Right lobe of liver (tissue), 6 donors: ENCODE measurements at regions of chr2 and their contacts with region 1.

Region 1: DNA sequence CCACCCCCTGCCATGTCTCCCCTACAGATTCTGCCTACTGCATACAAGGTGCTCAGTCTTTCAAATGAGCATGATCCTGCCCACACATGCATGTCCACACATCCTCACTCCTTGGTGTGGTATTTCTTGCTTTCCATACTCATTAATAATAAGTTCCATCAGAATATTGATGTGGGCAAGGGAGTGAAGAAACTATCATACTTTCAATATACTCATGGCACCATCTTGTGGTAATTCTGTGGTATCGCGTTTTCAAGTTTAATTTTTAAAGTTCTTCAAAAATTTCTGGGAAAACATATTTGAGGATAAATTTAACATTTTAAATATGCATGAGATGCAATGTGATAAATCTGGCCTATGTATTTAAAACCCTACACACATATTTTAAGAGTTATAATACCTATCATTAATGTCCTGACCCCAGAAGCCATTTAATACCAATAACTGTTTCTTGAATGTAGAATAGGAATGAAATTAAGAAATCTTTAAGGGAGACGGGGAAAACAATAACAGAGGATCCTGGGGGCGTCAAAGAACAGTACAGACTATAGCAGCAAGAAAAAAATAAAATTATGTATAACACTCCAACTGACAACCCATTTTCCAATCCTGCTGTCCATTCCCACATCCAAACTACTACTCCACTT is 110.1 kb downstream of the ZNF385B start:
- DNase-seq: no peak
- ATAC-seq: peak; percentile 56 to 71 (median 64)
- H3K4me3 ChIP-seq: no peak overlapping the region
- H3K27ac ChIP-seq: no peak overlapping the region
- H3K4me1 ChIP-seq: no peaks in the 10 kb centered on the region
- H3K27me3 ChIP-seq: no peaks in the 10 kb centered on the region
- CTCF ChIP-seq: peak; percentile 57 to 82 (median 64)
- POLR2A ChIP-seq: no peak

Region 2: GRCh38 chr2:179422037-179422643 is 329.1 kb before region 1 on chr2:
- intact Hi-C with region 1: loop called in 1 of 2 experiments (anchors 10 kb)
- DNase-seq: peak; percentile 70 to 75 (median 71)
- ATAC-seq: peak; percentile 94 to 95 (median 94)
- H3K4me3 ChIP-seq: no peak overlapping the region
- H3K27ac ChIP-seq: no peak overlapping the region
- H3K4me1 ChIP-seq: no peaks in the 10 kb centered on the region
- H3K27me3 ChIP-seq: no peaks in the 10 kb centered on the region
- CTCF ChIP-seq: peak; percentile 77 to 84 (median 78)
- POLR2A ChIP-seq: no peak